ENCODE measurements at regions of chr9 and their contacts with region 1.

Region 1: DNA sequence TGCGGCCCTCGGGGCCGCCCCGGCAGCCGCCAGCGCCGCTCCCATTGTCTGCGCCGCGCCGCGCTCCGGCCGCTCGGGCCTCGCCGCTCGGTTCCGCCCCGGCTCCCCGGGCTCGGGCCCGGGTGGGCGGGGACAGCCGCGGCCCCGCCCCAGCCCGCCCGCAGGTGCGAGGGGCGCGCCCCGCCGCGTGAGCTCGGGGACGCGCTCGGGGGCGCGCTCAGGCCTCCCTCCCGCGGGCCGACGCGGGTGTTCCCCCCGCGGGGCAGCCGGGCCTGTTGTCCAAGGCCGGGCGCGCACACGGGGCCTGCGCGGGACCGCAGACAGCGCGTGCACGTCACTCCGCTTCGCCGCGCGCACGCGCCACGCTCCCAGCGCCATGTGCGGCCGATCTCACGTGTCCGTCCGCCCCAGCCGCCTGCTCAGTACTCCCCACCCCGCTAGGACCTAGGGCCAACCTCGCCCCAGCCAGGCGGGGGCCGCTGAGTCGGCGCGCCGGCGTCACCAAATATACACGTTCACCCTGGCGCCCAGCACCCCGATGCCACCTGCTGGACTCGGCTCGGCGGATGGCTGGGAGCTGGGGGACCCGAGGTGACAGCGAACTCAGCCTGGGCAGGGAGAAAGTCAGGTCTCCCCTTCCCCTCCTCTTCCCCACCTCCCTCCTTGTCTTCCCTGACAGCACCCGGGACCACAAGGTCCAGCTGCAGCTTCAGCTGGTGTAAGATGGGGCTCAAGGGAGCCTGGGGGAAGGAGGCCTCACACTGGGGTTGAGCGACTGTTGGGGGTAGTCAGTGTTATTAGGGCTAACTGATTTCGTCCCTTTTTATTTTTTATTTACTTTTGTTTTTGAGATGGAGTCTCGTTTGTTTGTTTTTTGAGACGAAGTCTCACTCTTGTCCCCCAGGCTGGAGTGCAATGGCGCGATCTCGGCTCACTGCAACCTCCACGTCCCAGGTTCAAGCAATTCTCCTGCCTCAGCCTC is 14.3 kb downstream of the GBGT1 start:
- DNase-seq: peak; percentile 93 to 97
- H3K4me3 ChIP-seq: peak overlapping the region; percentile 60 to 78 (median 74)
- H3K27ac ChIP-seq: peak overlapping the region; percentile 78 to 94 (median 93)
- H3K4me1 ChIP-seq: peaks cover 27 to 61% (median 43%) of the 10 kb centered on the region in 4 donors
- H3K27me3 ChIP-seq: no peaks in the 10 kb centered on the region
- CTCF ChIP-seq: peak in 2 of 7 experiments; percentile 34 to 45
- EP300 ChIP-seq: no peak
- POLR2A ChIP-seq: peak in 1 of 4 donors; percentile 61

Region 2: DNA sequence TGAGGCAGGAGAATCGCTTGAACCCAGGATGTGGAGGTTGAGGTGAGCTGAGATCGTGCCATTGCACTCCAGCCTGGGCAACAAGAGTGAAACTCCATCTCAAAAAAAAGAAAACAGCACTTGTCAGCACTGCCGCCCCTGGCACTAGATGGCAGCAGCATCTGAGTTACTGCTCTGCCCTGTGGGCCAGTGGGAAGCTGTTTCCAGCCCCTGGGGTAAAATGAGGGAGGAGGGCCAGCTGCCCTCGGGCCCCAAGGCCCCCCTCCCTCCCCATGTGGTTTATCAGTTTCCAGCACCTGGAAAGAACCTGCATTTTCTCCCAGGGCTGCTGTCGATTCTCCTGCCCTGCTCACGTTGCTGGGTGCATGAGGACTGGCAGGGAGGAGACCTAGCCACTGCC is 100.8 kb before region 1 on chr9:
- intact Hi-C with region 1: loop called (anchors 10 kb)
- DNase-seq: peak; percentile 60 to 71
- H3K4me3 ChIP-seq: no peak overlapping the region
- H3K27ac ChIP-seq: peak overlapping the region in 1 of 5 donors; percentile 17
- H3K4me1 ChIP-seq: peaks cover 13 to 20% (median 15%) of the 10 kb centered on the region in 4 donors
- H3K27me3 ChIP-seq: no peaks in the 10 kb centered on the region
- CTCF ChIP-seq: peak in 3 of 7 experiments; percentile 14 to 40 (median 22)
- EP300 ChIP-seq: no peak
- POLR2A ChIP-seq: no peak

Region 3: GRCh38 chr9:133103183-133103986 is 46.0 kb before region 1 on chr9:
- intact Hi-C with region 1: loop called (anchors 2 kb)
- DNase-seq: peak; percentile 78 to 81
- H3K4me3 ChIP-seq: no peak overlapping the region
- H3K27ac ChIP-seq: peak overlapping the region in 2 of 5 donors; percentile 3 to 21
- H3K4me1 ChIP-seq: peaks cover 6 to 10% (median 8%) of the 10 kb centered on the region in 4 donors
- H3K27me3 ChIP-seq: no peaks in the 10 kb centered on the region
- CTCF ChIP-seq: peak in 6 of 7 experiments; percentile 95 to 99 (median 98)
- EP300 ChIP-seq: no peak
- POLR2A ChIP-seq: no peak

Measured in stomach (tissue), 19 donors.